Activated CD4-positive, alpha-beta T cell treated with anti-CD3 and anti-CD28 coated beads, Interleukin-2, amount 10 ng/mL, durations not matched to agents 24 days and 14 days (primary cell): ENCODE measurements at regions of chr2 and their contacts with region 1.

Region 1: DNA sequence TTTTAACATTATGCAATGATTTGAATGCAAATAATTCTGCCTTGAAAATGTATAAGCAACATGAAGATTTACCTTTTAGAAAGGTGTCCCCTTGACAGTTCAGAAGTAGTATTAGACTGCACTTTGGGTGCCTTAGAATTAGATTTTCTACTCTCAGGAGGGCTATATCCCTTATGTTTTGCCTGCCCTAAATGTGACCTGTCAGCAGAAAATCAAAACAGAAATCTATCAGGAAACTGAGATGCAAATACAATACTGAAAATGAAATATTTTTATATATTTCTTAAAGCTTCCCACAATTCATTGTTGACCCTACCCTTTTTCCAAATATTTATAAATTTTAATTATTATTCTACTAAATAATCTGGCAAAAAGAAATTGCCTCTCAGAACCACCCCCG is 61.5 kb downstream of the TRIP12 start:
- DNase-seq: no peak
- H3K4me3 Mint-ChIP-seq: no peak overlapping the region
- H3K27ac Mint-ChIP-seq: no peak overlapping the region
- H3K4me1 Mint-ChIP-seq: peaks cover 13% of the 10 kb centered on the region
- H3K27me3 Mint-ChIP-seq: no peaks in the 10 kb centered on the region

Region 2: DNA sequence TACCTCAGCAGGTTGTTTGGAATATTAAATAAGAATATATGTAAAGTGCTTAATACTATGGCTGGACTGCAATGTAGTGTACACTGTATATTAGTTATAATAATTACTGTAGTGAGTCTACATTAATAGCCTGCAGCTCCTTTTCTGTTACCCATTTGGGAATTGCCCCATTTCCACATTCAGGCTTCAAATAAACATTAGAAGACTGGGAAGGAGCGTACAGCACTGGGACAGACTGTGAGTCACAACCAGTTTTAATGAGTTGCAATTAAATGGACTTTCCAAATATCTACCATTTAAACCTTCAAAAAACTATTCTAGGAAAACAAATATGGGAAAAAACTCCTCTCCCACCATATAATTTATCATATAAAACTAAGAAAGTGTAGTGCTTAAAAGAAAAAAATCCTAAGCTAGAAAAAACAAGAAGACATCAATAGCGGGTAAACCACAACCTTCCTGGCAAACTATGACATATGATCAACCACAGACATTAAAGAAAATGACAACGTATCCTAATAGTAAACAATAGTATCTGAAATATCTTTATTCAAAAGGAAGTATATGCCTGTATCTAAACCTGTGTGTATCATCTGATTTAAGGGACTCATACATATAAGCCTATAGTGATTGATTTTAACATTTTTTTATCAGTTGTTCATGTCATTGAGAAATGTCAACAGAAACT is 24.6 kb before region 1 on chr2:
- intact Hi-C with region 1: loop called (anchors 1 kb)
- DNase-seq: no peak
- H3K4me3 Mint-ChIP-seq: peak overlapping the region; percentile 52
- H3K27ac Mint-ChIP-seq: no peak overlapping the region
- H3K4me1 Mint-ChIP-seq: peaks cover 31% of the 10 kb centered on the region
- H3K27me3 Mint-ChIP-seq: no peaks in the 10 kb centered on the region